Activated CD4-positive, alpha-beta memory T cell treated with anti-CD3 and anti-CD28 coated beads, Interleukin-2, amount 10 ng/mL, durations not matched to agents 7 days and 5 days (primary cell): ENCODE measurements at regions of chr11 and their contacts with region 1.

Region 1: GRCh38 chr11:122863704-122864326 is 18.7 kb upstream of the JHY start:
- DNase-seq: peak; percentile 49
- H3K4me3 Mint-ChIP-seq: no peak overlapping the region
- H3K27ac Mint-ChIP-seq: no peak overlapping the region
- H3K4me1 Mint-ChIP-seq: no peaks in the 10 kb centered on the region
- H3K27me3 Mint-ChIP-seq: peaks cover 44% of the 10 kb centered on the region

Region 2: GRCh38 chr11:122874991-122875390 is 11.2 kb after region 1 on chr11:
- CTCF ChIA-PET with region 1: interaction called, 15 read pairs
- POLR2A ChIA-PET with region 1: no interaction called
- DNase-seq: no peak
- H3K4me3 Mint-ChIP-seq: no peak overlapping the region
- H3K27ac Mint-ChIP-seq: no peak overlapping the region
- H3K4me1 Mint-ChIP-seq: peaks cover 7% of the 10 kb centered on the region
- H3K27me3 Mint-ChIP-seq: peaks cover 14% of the 10 kb centered on the region

Region 3: GRCh38 chr11:122897606-122898485 is 34.0 kb after region 1 on chr11:
- CTCF ChIA-PET with region 1: no interaction called
- POLR2A ChIA-PET with region 1: no interaction called
- DNase-seq: no peak
- H3K4me3 Mint-ChIP-seq: no peak overlapping the region
- H3K27ac Mint-ChIP-seq: no peak overlapping the region
- H3K4me1 Mint-ChIP-seq: peaks cover 1% of the 10 kb centered on the region
- H3K27me3 Mint-ChIP-seq: no peaks in the 10 kb centered on the region

Region 4: GRCh38 chr11:123020968-123021367 is 157.2 kb after region 1 on chr11:
- CTCF ChIA-PET with region 1: interaction called, 106 read pairs
- POLR2A ChIA-PET with region 1: no interaction called
- DNase-seq: peak; percentile 38
- H3K4me3 Mint-ChIP-seq: no peak overlapping the region
- H3K27ac Mint-ChIP-seq: no peak overlapping the region
- H3K4me1 Mint-ChIP-seq: peaks cover 6% of the 10 kb centered on the region
- H3K27me3 Mint-ChIP-seq: peaks cover 18% of the 10 kb centered on the region